Activated CD8-positive, alpha-beta T cell treated with anti-CD3 and anti-CD28 coated beads for 36 hours (primary cell): ENCODE measurements at regions of chr1 and their contacts with region 1.

Region 1: DNA sequence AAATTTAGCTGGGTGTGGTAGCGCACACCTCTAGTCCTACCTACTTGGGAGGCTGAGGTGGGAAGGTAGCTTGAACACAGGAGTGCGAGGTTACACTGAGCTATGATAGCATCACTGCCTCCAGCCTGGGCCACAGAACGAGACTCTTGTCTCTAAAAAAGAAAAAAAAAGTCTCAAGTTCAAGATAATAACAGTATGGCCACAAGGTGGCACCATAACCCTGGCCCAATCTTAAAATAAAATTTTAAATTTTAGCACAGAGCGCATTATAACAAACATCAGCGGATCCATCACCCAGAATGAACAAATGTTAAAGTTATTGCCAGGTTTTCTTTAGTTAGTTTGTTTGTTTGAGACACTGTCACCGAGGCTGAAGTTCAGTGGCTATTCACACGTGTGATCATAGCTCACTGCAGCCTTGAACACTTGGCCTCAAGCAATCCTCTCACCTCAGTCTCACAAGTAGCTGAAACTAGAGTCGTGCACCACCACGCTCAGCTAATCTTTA is 2.9 kb upstream of the HTR6 start:
- DNase-seq: peak; percentile 68
- ATAC-seq: no peak
- H3K4me3 Mint-ChIP-seq: no peak overlapping the region
- H3K27ac Mint-ChIP-seq: no peak overlapping the region
- H3K4me1 Mint-ChIP-seq: peaks cover 22% of the 10 kb centered on the region
- H3K27me3 Mint-ChIP-seq: peaks cover 24% of the 10 kb centered on the region
- CTCF ChIP-seq: peak; percentile 88

Region 2: DNA sequence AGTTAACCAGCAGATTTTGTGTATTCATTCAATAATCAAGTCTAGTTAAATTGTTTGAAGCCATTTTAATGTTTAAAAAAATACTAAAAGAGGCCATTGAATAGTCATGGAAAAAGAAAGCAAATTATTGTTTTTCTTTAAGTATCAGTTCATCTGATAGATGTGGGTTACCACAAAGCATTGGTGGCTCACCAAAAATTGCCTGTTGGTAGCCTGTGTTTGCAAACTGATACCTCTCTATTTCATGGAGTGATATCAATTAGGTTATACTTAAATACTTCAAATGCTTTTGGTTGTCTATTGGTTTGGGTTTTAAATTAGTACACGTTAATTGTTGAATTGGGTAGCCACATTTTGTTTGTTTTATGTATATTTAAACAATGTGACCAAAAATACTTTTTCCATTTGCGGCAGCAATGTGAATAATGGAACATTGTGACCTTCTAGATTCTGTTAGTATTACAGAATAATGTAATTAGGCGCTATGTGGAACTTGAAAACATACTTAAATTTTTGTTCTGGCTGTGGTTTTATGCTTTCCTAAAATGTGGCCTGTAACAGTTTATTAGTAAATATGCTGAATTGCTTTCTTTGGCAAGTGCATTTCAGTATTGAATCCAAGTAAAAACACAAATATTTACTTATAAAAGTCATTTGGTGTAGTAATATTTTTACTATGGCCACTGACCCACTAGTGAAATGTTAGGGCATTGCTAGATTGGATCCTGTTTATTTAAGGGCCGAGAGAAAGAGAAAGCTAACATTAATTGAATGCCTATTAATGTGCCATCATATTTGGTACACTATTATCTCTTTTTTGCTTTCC is 54.7 kb before region 1 on chr1:
- CTCF ChIA-PET with region 1: no interaction called
- POLR2A ChIA-PET with region 1: no interaction called
- intact Hi-C with region 1: no loop called
- DNase-seq: peak; percentile 86
- ATAC-seq: peak; percentile 66
- H3K4me3 Mint-ChIP-seq: peak overlapping the region; percentile 2
- H3K27ac Mint-ChIP-seq: peak overlapping the region; percentile 74
- H3K4me1 Mint-ChIP-seq: peaks cover 66% of the 10 kb centered on the region
- H3K27me3 Mint-ChIP-seq: no peaks in the 10 kb centered on the region
- CTCF ChIP-seq: no peak

Region 3: GRCh38 chr1:19643602-19644394 is 18.0 kb before region 1 on chr1 and contains the start of gene NBL1:
- CTCF ChIA-PET with region 1: interaction called, 23 read pairs
- POLR2A ChIA-PET with region 1: interaction called, 6 read pairs
- intact Hi-C with region 1: no loop called
- DNase-seq: peak; percentile 80
- ATAC-seq: peak; percentile 86
- H3K4me3 Mint-ChIP-seq: peak within 1 kb of the TSS; percentile 83
- H3K27ac Mint-ChIP-seq: peak within 1 kb of the TSS; percentile 69
- H3K4me1 Mint-ChIP-seq: peaks cover 28% of the 10 kb centered on the region
- H3K27me3 Mint-ChIP-seq: peaks cover 10% of the 10 kb centered on the region
- CTCF ChIP-seq: no peak
- total RNA-seq, gene NBL1: 27.0 to 27.6 TPM

Region 4: GRCh38 chr1:19676438-19676922 is 14.7 kb after region 1 on chr1:
- CTCF ChIA-PET with region 1: interaction called, 42 read pairs
- POLR2A ChIA-PET with region 1: interaction called, 8 read pairs
- intact Hi-C with region 1: no loop called
- DNase-seq: peak; percentile 49
- ATAC-seq: peak; percentile 47
- H3K4me3 Mint-ChIP-seq: no peak overlapping the region
- H3K27ac Mint-ChIP-seq: no peak overlapping the region
- H3K4me1 Mint-ChIP-seq: no peaks in the 10 kb centered on the region
- H3K27me3 Mint-ChIP-seq: peaks cover 4% of the 10 kb centered on the region
- CTCF ChIP-seq: no peak

Region 5: DNA sequence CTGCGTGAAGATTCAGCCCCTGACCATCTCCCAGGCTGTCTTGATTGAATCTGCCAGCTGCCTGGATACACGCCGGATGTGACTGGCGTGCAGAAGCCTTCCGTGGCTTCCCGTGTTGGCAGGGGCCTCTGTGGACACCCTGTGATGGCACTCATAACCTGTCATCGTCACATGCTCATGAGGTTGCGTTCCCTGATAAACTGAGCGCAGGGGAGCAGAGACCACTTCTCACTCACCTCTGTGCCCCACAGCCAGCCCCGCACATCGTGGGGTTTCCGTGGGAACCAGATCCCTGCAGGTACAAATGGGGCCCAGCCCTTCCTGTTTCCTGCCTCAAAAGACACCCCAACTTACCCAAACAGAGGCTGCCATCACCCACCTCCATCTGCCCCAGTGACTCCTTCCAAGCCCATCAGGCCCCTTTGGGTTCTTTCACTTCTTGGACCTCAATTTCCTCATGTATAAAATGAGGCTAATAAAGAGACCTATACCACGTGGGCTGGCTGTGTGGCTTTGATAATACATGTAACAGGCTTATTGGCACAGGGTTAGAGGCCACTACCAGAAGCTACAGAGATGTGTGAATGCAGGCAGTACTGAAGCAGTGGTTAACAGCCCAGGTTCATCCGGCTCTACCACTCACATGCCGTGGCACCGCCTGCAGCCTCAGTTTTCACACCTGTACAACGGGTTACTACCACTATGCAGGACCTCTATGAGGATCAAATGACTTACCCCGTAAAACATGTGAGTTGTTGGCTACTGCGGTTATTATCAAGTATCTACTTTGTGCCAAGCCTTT is 26.5 kb after region 1 on chr1:
- CTCF ChIA-PET with region 1: interaction called, 21 read pairs
- POLR2A ChIA-PET with region 1: no interaction called
- intact Hi-C with region 1: no loop called
- DNase-seq: peak; percentile 37
- ATAC-seq: peak; percentile 73
- H3K4me3 Mint-ChIP-seq: no peak overlapping the region
- H3K27ac Mint-ChIP-seq: peak overlapping the region; percentile 71
- H3K4me1 Mint-ChIP-seq: peaks cover 35% of the 10 kb centered on the region
- H3K27me3 Mint-ChIP-seq: no peaks in the 10 kb centered on the region
- CTCF ChIP-seq: no peak

Region 6: GRCh38 chr1:19715334-19716203 is 53.8 kb after region 1 on chr1:
- CTCF ChIA-PET with region 1: interaction called, 18 read pairs
- POLR2A ChIA-PET with region 1: no interaction called
- intact Hi-C with region 1: no loop called
- DNase-seq: peak; percentile 96
- ATAC-seq: peak; percentile 95
- H3K4me3 Mint-ChIP-seq: no peak overlapping the region
- H3K27ac Mint-ChIP-seq: no peak overlapping the region
- H3K4me1 Mint-ChIP-seq: peaks cover 17% of the 10 kb centered on the region
- H3K27me3 Mint-ChIP-seq: no peaks in the 10 kb centered on the region
- CTCF ChIP-seq: peak; percentile 79

Region 7: GRCh38 chr1:19811206-19811851 is 149.6 kb after region 1 on chr1:
- CTCF ChIA-PET with region 1: interaction called, 12 read pairs
- POLR2A ChIA-PET with region 1: no interaction called
- intact Hi-C with region 1: no loop called
- DNase-seq: peak; percentile 68
- ATAC-seq: peak; percentile 71
- H3K4me3 Mint-ChIP-seq: no peak overlapping the region
- H3K27ac Mint-ChIP-seq: no peak overlapping the region
- H3K4me1 Mint-ChIP-seq: no peaks in the 10 kb centered on the region
- H3K27me3 Mint-ChIP-seq: no peaks in the 10 kb centered on the region
- CTCF ChIP-seq: peak; percentile 74